Activated naive CD4-positive, alpha-beta T cell treated with anti-CD3 and anti-CD28 coated beads, Interleukin-2, amount 10 ng/mL, durations not matched to agents 7 days and 5 days (primary cell): ENCODE measurements at regions of chr16 and their contacts with region 1.

Region 1: GRCh38 chr16:3654249-3654991 is at the start of gene DNASE1:
- DNase-seq: peak; percentile 70
- H3K4me3 Mint-ChIP-seq: no peak within 1 kb of the TSS
- H3K27ac Mint-ChIP-seq: peak within 1 kb of the TSS; percentile 19
- H3K4me1 Mint-ChIP-seq: peaks cover 13% of the 10 kb centered on the region
- H3K27me3 Mint-ChIP-seq: no peaks in the 10 kb centered on the region

Region 2: DNA sequence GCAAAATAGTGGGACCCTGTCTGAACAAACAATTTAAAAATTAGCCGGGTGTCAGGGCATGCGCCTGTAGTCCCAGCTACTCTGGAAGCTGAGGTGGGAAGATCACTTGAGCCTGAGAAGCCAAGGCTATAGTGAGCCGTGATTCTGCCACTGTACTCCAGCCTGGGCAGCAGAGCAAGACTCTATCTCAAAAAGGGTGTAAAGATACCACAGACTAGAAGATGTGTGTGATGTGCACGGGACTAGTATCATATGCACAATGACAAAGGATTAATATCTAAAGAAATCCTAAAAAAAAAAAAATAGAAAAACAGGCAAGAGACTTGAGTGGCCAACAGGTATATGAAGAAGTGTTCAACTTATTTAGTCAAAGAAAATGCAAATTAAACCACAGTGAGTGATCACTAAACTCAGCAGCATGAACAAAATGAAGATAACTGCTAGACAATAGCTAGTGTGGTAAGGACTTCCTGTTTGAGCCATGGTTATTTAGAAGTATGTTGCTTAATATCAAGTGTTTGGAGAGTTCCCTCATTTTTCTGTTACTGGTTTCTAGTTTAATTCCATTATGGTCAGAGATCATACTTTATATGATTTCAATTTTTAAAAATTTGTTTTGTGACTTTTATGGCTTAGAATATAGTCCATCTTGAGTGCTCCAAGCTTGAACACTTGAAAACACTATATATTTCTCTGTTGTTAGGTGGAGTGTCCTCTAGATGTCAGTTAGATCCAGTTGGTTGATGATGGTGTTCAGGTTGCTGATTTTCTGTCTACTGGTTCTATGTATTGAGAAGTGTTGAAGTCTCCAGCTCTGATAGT is 28.3 kb before region 1 on chr16:
- CTCF ChIA-PET with region 1: interaction called, 11 read pairs
- DNase-seq: no peak
- H3K4me3 Mint-ChIP-seq: no peak overlapping the region
- H3K27ac Mint-ChIP-seq: peak overlapping the region; percentile 74
- H3K4me1 Mint-ChIP-seq: peaks cover 22% of the 10 kb centered on the region
- H3K27me3 Mint-ChIP-seq: no peaks in the 10 kb centered on the region